H1 (cell line): ENCODE measurements at regions of chr3 and their contacts with region 1.

Region 1: DNA sequence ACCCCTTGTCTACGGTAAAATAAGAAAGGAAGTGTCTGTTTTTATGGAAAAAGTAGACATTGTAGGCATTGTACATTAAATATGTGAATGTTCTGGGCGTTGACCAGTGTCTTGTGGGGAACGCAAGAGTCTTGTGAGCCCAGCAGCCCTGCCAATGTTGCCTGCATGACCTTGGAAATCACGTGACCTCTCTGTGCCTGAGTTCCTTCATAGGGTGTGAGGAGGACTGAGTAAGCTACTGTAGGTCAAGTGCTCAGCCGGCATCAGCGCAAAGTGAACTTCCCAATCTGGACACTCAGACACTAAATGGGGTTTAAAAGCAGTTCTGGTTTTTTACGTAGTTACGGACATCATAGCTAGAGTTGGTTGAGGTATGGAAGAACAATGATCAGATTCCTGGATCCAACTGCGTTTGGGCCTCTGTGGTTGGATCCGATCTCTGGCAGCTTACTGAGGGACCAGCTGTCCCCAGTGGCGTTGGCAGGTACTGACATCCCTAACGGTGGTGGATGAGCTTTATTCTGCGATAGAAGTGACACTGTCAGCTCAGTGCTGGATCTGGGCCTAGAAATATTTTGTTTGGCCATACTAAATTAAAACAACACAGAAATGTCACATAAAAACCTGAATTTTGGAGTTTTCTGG is 63.8 kb downstream of the SPSB4 start:
- DNase-seq: peak in 1 of 2 experiments; percentile 65
- H3K4me3 ChIP-seq: no peak overlapping the region
- H3K27ac ChIP-seq: no peak overlapping the region
- H3K4me1 ChIP-seq: no peaks in the 10 kb centered on the region
- H3K27me3 ChIP-seq: no peaks in the 10 kb centered on the region
- CTCF ChIP-seq: peak; percentile 65 to 81 (median 80)
- EP300 ChIP-seq: no peak
- POLR2A ChIP-seq: no peak
- RAD21 ChIP-seq: peak; percentile 55 to 70

Region 2: GRCh38 chr3:141000027-141000663 is 114.8 kb before region 1 on chr3:
- CTCF ChIA-PET with region 1: interaction called, 29 read pairs
- POLR2A ChIA-PET with region 1: no interaction called
- DNase-seq: peak; percentile 34 to 76
- H3K4me3 ChIP-seq: no peak overlapping the region
- H3K27ac ChIP-seq: no peak overlapping the region
- H3K4me1 ChIP-seq: no peaks in the 10 kb centered on the region
- H3K27me3 ChIP-seq: no peaks in the 10 kb centered on the region
- CTCF ChIP-seq: peak; percentile 87 to 97 (median 95)
- EP300 ChIP-seq: no peak
- POLR2A ChIP-seq: no peak
- RAD21 ChIP-seq: peak; percentile 99

Region 3: GRCh38 chr3:141011232-141011996 is 103.5 kb before region 1 on chr3:
- CTCF ChIA-PET with region 1: interaction called, 61 read pairs
- POLR2A ChIA-PET with region 1: no interaction called
- DNase-seq: peak; percentile 66 to 98
- H3K4me3 ChIP-seq: no peak overlapping the region
- H3K27ac ChIP-seq: no peak overlapping the region
- H3K4me1 ChIP-seq: peaks cover 0 to 11% (median 0%) of the 10 kb centered on the region in 4 experiments; a peak in 2 of 7 replicates
- H3K27me3 ChIP-seq: peaks cover 0 to 2% (median 0%) of the 10 kb centered on the region in 4 experiments; a peak in 1 of 7 replicates
- CTCF ChIP-seq: peak; percentile 91 to 98 (median 96)
- EP300 ChIP-seq: no peak
- POLR2A ChIP-seq: no peak
- RAD21 ChIP-seq: peak; percentile 91 to 94

Region 4: GRCh38 chr3:141044695-141045641 is 70.0 kb before region 1 on chr3:
- CTCF ChIA-PET with region 1: interaction called, 119 read pairs
- POLR2A ChIA-PET with region 1: interaction called, 7 read pairs
- DNase-seq: no peak
- H3K4me3 ChIP-seq: no peak overlapping the region
- H3K27ac ChIP-seq: no peak overlapping the region
- H3K4me1 ChIP-seq: peaks cover 0 to 9% (median 2%) of the 10 kb centered on the region in 4 experiments; a peak in 2 of 7 replicates
- H3K27me3 ChIP-seq: peaks cover 0 to 18% (median 3%) of the 10 kb centered on the region in 4 experiments; a peak in 4 of 7 replicates
- CTCF ChIP-seq: no peak
- EP300 ChIP-seq: no peak
- POLR2A ChIP-seq: no peak
- RAD21 ChIP-seq: no peak

Region 5: DNA sequence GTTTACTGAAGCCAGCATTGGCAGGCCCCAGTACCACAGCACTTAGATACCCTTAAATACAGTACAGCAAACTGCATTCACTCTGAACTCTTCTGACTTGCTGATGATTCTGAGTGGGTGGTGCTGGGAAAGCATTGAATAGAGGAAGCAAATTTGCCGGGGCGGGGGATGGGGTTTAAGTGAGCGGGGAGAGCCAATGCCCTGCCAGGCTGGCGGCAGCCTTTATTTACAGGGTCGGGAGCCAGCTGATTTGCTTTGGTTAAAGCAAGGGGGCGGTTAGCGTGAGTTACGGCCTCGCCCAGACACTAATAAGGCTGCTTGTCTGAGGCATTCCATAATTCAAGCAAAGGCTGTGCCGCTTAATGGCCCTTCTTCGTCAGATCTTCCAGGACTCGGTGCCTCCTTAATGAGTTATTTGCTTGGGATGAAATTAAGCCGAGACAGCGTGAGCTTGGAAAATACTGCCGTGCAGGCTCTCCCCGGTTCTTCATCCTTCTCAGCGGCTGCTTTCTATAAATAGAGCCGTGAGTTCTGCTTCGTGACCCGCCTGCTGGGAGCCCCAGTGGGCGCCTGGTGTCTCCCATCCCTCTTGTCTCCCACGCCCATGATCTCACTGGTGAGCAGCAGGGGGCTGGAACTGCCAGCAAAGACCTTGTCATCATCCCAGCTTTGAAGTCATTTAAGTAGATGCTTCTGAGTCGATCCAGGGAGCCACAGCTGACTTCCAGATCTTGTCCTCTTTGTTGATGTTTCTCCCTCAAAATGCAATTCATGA is 38.0 kb before region 1 on chr3:
- CTCF ChIA-PET with region 1: interaction called, 20 read pairs
- POLR2A ChIA-PET with region 1: interaction called, 4 read pairs
- DNase-seq: no peak
- H3K4me3 ChIP-seq: no peak overlapping the region
- H3K27ac ChIP-seq: no peak overlapping the region
- H3K4me1 ChIP-seq: peaks cover 47 to 67% (median 57%) of the 10 kb centered on the region in 4 experiments
- H3K27me3 ChIP-seq: peaks cover 0 to 6% (median 0%) of the 10 kb centered on the region in 4 experiments; a peak in 4 of 7 replicates
- CTCF ChIP-seq: no peak
- EP300 ChIP-seq: no peak
- POLR2A ChIP-seq: no peak
- RAD21 ChIP-seq: no peak

Region 6: DNA sequence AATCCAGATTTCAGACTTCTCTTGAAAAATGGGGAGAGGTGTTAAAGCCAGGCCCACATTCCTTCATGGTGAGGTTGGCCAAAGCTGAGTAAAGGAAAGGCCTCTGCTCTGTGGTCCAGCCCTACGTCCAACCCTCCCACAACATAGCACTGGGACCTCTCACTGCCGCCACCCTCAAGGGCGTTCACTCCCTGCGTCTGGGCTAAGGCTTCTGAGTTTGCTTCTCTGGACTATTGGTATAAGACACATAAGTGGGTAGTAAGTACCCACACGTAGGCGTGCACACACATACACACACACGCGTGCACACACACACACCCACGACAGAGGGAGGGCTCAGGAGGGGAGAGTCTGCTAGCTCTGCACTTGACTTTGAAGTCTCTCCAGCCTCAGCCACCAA is 36.5 kb after region 1 on chr3:
- CTCF ChIA-PET with region 1: interaction called, 22 read pairs
- POLR2A ChIA-PET with region 1: no interaction called
- DNase-seq: no peak
- H3K4me3 ChIP-seq: no peak overlapping the region
- H3K27ac ChIP-seq: no peak overlapping the region
- H3K4me1 ChIP-seq: peaks cover 2 to 5% (median 3%) of the 10 kb centered on the region in 4 experiments; a peak in 6 of 7 replicates
- H3K27me3 ChIP-seq: no peaks in the 10 kb centered on the region
- CTCF ChIP-seq: no peak
- EP300 ChIP-seq: no peak
- POLR2A ChIP-seq: no peak
- RAD21 ChIP-seq: no peak

Region 7: DNA sequence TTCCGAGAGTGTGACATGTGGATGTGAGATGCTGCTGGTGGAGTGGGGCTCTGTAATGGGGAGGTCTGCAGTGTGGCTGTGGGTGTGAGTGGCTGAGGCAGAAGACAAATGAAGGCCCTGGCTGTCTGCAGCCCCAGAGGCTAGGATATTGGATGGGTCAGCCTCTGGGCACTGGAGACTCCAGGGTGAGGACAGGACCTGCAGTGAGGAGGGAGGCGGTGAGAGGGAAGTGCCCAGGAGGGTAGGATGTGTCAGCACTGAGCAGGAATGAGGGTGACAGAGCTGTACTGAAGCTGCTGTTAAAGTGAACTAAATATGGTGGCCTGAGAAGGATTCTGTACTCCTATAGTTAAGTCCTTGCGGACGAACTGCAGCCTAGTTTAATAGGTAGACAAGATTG is 89.4 kb after region 1 on chr3:
- CTCF ChIA-PET with region 1: no interaction called
- POLR2A ChIA-PET with region 1: no interaction called
- DNase-seq: no peak
- H3K4me3 ChIP-seq: no peak overlapping the region
- H3K27ac ChIP-seq: no peak overlapping the region
- H3K4me1 ChIP-seq: no peaks in the 10 kb centered on the region; a peak in 2 of 7 replicates
- H3K27me3 ChIP-seq: no peaks in the 10 kb centered on the region
- CTCF ChIP-seq: no peak
- EP300 ChIP-seq: no peak
- POLR2A ChIP-seq: no peak
- RAD21 ChIP-seq: no peak